CD4-positive, alpha-beta T cell (primary cell): ENCODE measurements at regions of chr11 and their contacts with region 1.

Region 1: GRCh38 chr11:77994412-77995362 is at the start of gene INTS4:
- DNase-seq: peak; percentile 95 to 100 (median 97)
- ATAC-seq: peak; percentile 96
- H3K4me3 ChIP-seq: peak within 1 kb of the TSS; percentile 83
- H3K4me3 Mint-ChIP-seq: peak within 1 kb of the TSS; percentile 96
- H3K27ac ChIP-seq: peak within 1 kb of the TSS; percentile 77 to 85
- H3K27ac Mint-ChIP-seq: peak within 1 kb of the TSS; percentile 95
- H3K4me1 ChIP-seq: peaks cover 22% of the 10 kb centered on the region
- H3K4me1 Mint-ChIP-seq: peaks cover 39% of the 10 kb centered on the region
- H3K27me3 ChIP-seq: no peaks in the 10 kb centered on the region
- H3K27me3 Mint-ChIP-seq: no peaks in the 10 kb centered on the region
- CTCF ChIP-seq: no peak
- total RNA-seq, gene INTS4: 46.5 to 49.2 TPM

Region 2: DNA sequence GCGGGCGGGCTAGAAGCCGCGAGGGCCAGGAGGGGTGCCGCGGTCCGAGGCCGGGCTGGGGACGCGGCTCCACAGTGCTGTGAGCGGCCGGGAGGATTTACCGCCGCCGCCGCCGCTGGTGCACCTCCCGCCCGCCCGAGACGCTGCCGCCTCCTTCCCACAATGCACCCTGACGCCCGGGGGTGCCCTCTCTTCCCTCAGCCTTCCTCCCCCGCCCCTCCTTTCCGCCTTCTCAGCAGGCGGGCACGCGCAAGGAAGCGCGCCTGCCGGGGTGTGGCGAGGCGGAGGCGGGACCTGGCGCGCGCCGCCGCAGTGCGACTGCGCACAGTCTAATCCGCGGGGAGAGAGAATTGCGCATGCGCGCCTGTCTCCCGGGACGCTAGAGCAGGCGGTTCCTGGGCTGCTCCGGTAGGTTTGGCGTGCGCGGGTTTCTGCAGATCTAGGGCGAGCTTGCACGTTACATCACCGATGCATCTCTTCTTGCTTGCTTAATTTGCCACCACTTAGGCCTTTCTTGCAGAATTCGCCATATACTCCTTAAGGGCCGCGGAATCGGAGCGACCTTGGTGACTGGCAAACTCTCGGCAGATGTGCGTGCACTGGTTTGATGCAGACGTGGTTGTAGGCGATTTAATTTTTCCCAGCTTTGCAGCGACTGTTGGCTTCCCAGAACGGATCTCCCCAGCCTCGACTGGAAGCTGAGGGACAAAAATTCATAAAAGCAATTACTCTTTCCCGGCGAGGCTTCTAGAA is 1613.5 kb before region 1 on chr11 and contains the starts of genes GVQW3 and THAP12:
- CTCF ChIA-PET with region 1: no interaction called
- POLR2A ChIA-PET with region 1: no interaction called
- intact Hi-C with region 1: loop called in 1 of 2 experiments (anchors 10 kb)
- DNase-seq: peak; percentile 93 to 99 (median 97)
- ATAC-seq: peak; percentile 89
- H3K4me3 ChIP-seq: peak within 1 kb of the TSS; percentile 78
- H3K4me3 Mint-ChIP-seq: peak within 1 kb of the TSS; percentile 97
- H3K27ac ChIP-seq: peak within 1 kb of the TSS; percentile 11 to 24
- H3K27ac Mint-ChIP-seq: peak within 1 kb of the TSS; percentile 87
- H3K4me1 ChIP-seq: peaks cover 45% of the 10 kb centered on the region
- H3K4me1 Mint-ChIP-seq: peaks cover 76% of the 10 kb centered on the region
- H3K27me3 ChIP-seq: no peaks in the 10 kb centered on the region
- H3K27me3 Mint-ChIP-seq: no peaks in the 10 kb centered on the region
- CTCF ChIP-seq: no peak
- total RNA-seq, gene GVQW3: 1.8 TPM
- total RNA-seq, gene THAP12: 34.8 to 36.3 TPM

Region 3: DNA sequence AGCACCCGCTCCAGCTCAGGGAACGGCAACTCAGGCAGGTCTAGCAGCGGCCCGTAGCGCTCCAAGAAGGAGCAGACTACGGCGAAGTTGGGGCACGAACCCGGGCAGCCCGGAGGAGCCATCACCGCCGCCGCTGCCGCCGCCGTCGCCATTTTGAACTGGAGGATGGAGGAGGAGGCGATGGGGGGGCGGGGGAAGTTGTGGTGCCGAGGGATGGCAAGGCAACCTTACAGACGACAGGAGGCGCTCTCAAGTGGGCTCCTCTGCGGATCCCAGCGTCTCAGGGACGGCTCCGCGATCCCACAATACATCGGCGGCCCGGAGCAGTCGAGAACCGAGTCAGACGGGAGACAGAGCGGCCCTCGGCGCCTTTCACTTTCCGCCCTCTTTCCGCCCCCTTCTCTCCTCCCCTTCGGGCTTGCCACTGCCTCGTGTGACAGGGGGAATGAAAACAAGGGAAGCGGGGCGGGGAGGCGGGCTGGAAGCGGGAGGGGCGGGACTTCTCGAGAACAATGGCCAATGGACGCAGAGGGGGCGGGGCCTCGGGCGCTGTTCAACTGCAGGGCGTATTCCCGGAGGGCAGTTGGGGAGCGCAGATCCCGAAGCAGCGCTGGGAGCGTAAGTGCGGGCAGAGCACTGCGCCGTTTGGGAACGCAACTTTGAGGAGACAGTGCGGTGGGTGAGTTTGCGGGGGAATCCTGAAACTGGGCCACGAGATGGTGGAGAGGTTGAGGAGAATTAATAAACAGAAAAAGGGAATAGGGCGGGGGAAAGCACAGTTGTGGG is 173.9 kb before region 1 on chr11 and contains the starts of genes AAMDC and RSF1:
- CTCF ChIA-PET with region 1: interaction called, 5 read pairs
- POLR2A ChIA-PET with region 1: interaction called, 61 read pairs
- intact Hi-C with region 1: loop called (anchors 1 kb)
- DNase-seq: peak; percentile 92 to 99 (median 96)
- ATAC-seq: peak; percentile 80
- H3K4me3 ChIP-seq: peak within 1 kb of the TSS; percentile 84
- H3K4me3 Mint-ChIP-seq: peak within 1 kb of the TSS; percentile 98
- H3K27ac ChIP-seq: peak within 1 kb of the TSS; percentile 74 to 95
- H3K27ac Mint-ChIP-seq: peak within 1 kb of the TSS; percentile 92
- H3K4me1 ChIP-seq: peaks cover 29% of the 10 kb centered on the region
- H3K4me1 Mint-ChIP-seq: peaks cover 46% of the 10 kb centered on the region
- H3K27me3 ChIP-seq: no peaks in the 10 kb centered on the region
- H3K27me3 Mint-ChIP-seq: no peaks in the 10 kb centered on the region
- CTCF ChIP-seq: peak; percentile 69
- total RNA-seq, gene AAMDC: 1.5 to 2.1 TPM
- total RNA-seq, gene RSF1: 87.7 to 91.9 TPM

Region 4: DNA sequence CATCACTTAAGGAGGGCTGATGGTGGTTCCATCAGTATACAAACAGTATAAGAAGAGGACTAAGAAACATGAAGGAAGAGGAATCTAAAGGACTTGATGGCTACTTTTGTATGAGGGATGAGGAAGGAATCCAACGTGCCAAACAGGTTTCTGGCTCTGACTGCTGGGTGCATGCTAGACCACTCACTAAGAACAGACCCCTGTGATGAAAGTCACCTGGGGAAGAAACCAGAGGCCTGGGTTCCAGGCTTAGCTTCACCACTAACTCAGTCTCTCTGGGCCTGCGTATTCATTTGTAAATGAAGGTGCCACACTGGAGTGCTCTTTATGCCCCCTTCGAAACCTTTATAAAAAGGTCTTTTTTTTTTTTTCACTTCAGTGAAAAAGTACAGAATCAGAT is 118.6 kb before region 1 on chr11:
- CTCF ChIA-PET with region 1: no interaction called
- POLR2A ChIA-PET with region 1: no interaction called
- intact Hi-C with region 1: no loop called
- DNase-seq: no peak
- ATAC-seq: no peak
- H3K4me3 ChIP-seq: no peak overlapping the region
- H3K4me3 Mint-ChIP-seq: no peak overlapping the region
- H3K27ac ChIP-seq: no peak overlapping the region
- H3K27ac Mint-ChIP-seq: peak overlapping the region; percentile 24
- H3K4me1 ChIP-seq: no peaks in the 10 kb centered on the region
- H3K4me1 Mint-ChIP-seq: no peaks in the 10 kb centered on the region
- H3K27me3 ChIP-seq: no peaks in the 10 kb centered on the region
- H3K27me3 Mint-ChIP-seq: no peaks in the 10 kb centered on the region
- CTCF ChIP-seq: no peak

Region 5: GRCh38 chr11:78045851-78046485 is 51.3 kb after region 1 on chr11:
- CTCF ChIA-PET with region 1: interaction called, 6 read pairs
- POLR2A ChIA-PET with region 1: interaction called, 11 read pairs
- intact Hi-C with region 1: loop called (anchors 1 kb)
- DNase-seq: peak; percentile 58 to 87 (median 78)
- ATAC-seq: peak; percentile 97
- H3K4me3 ChIP-seq: peak overlapping the region; percentile 37
- H3K4me3 Mint-ChIP-seq: peak overlapping the region; percentile 73
- H3K27ac ChIP-seq: no peak overlapping the region
- H3K27ac Mint-ChIP-seq: no peak overlapping the region
- H3K4me1 ChIP-seq: peaks cover 10% of the 10 kb centered on the region
- H3K4me1 Mint-ChIP-seq: peaks cover 12% of the 10 kb centered on the region
- H3K27me3 ChIP-seq: no peaks in the 10 kb centered on the region
- H3K27me3 Mint-ChIP-seq: no peaks in the 10 kb centered on the region
- CTCF ChIP-seq: peak; percentile 90

Region 6: DNA sequence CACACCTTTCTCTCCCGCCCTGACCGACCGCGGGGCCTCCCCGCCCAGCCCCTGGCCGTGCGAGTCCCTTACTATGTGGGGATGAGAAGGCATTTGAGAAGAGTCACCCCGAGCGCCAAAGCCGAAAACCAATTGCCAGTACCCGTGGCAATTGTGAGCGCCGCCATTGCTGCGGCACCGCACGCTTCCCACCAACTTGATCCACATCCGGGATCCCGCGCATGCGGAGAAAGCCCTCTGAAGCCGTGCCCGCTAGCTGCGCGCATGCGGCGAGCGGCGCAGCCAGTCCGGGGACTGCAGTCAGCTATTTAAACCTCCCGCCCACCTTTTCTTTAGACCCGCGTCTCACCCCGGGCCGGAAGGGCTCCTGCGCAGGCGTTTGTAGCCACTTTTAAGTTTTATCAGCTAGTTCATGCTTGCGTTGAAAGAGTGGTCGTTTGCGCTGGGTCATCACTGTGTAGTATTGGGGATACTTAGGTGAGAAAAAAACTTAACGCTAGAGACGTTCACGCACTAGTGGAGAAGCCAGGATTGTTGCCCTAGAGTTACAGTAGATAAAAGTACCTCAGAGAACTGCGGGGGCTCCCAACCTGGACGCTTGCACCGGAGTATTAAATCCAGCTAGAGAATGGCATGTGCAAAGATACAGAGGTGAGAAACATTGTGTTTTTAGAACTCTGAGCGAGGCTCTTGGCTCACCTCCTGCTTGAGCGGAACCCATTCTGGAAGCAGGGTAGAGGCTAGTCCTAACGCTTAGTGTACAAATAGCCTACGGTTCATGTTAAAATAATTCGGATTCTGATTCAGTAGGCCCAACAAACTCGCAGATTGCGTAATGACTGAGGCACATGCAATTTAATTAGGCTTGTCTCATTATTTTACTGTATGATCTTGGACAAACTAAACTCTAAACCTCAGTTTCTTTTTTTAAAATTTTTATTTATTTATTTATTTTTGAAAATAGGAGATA is 145.0 kb after region 1 on chr11 and contains the start of gene ALG8:
- CTCF ChIA-PET with region 1: interaction called, 5 read pairs
- POLR2A ChIA-PET with region 1: interaction called, 36 read pairs
- intact Hi-C with region 1: loop called in 1 of 2 experiments (anchors 1 kb)
- DNase-seq: peak; percentile 96 to 98 (median 97)
- ATAC-seq: peak; percentile 94
- H3K4me3 ChIP-seq: peak within 1 kb of the TSS; percentile 82
- H3K4me3 Mint-ChIP-seq: peak within 1 kb of the TSS; percentile 96
- H3K27ac ChIP-seq: peak within 1 kb of the TSS; percentile 72 to 84
- H3K27ac Mint-ChIP-seq: peak within 1 kb of the TSS; percentile 91
- H3K4me1 ChIP-seq: peaks cover 20% of the 10 kb centered on the region
- H3K4me1 Mint-ChIP-seq: peaks cover 49% of the 10 kb centered on the region
- H3K27me3 ChIP-seq: no peaks in the 10 kb centered on the region
- H3K27me3 Mint-ChIP-seq: no peaks in the 10 kb centered on the region
- CTCF ChIP-seq: no peak
- total RNA-seq, gene ALG8: 14.4 to 14.9 TPM

Region 7: GRCh38 chr11:78416305-78417178 is 421.9 kb after region 1 on chr11:
- CTCF ChIA-PET with region 1: interaction called, 4 read pairs
- POLR2A ChIA-PET with region 1: interaction called, 5 read pairs
- intact Hi-C with region 1: loop called in 1 of 2 experiments (anchors 5 kb)
- DNase-seq: peak; percentile 57 to 86 (median 74)
- ATAC-seq: peak; percentile 70
- H3K4me3 ChIP-seq: peak overlapping the region; percentile 59
- H3K4me3 Mint-ChIP-seq: peak overlapping the region; percentile 88
- H3K27ac ChIP-seq: peak overlapping the region in 1 of 2 donors; percentile 4
- H3K27ac Mint-ChIP-seq: peak overlapping the region; percentile 84
- H3K4me1 ChIP-seq: peaks cover 33% of the 10 kb centered on the region
- H3K4me1 Mint-ChIP-seq: peaks cover 22% of the 10 kb centered on the region
- H3K27me3 ChIP-seq: peaks cover 0 to 5% of the 10 kb centered on the region in 2 experiments
- H3K27me3 Mint-ChIP-seq: peaks cover 28% of the 10 kb centered on the region
- CTCF ChIP-seq: peak; percentile 73